ENCODE measurements at regions of chr9 and their contacts with region 1.

Region 1: DNA sequence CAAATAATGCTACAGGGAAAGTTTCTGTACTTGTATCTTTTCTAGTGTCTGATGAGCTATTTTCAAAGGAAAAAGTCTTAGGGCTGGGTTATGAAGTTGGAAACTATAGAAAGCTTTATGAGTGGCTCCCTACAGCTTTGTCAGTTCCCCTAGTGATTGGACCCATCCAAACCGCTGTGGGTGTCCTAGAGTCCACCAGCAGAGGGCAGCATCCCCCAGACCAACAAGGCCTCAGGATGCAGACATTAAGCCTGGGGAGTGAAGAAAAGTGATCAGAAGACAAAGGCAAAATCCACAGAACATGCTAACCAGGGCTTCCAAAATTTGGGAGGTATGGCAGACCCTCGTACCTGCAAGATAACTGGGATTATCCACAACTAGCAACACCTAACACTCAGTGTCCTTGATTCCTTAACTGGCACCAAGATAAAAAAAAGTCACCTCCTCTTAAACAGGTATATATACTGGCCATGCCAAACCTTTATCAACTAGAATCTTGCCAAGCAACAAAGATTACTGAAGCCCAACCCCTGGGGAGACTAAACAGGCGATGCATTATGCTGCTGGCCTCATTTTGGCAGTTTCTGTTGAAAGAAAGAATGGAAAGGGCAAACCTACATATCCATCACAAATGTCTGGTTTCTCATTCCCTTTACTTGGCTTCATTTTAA is 110.4 kb upstream of the NR5A1 start:
- DNase-seq: peak; percentile 78 to 90 (median 84)
- H3K4me3 ChIP-seq: no peak overlapping the region
- H3K27ac ChIP-seq: no peak overlapping the region
- H3K4me1 ChIP-seq: peaks cover 0 to 21% (median 15%) of the 10 kb centered on the region in 4 experiments
- H3K27me3 ChIP-seq: no peaks in the 10 kb centered on the region

Region 2: DNA sequence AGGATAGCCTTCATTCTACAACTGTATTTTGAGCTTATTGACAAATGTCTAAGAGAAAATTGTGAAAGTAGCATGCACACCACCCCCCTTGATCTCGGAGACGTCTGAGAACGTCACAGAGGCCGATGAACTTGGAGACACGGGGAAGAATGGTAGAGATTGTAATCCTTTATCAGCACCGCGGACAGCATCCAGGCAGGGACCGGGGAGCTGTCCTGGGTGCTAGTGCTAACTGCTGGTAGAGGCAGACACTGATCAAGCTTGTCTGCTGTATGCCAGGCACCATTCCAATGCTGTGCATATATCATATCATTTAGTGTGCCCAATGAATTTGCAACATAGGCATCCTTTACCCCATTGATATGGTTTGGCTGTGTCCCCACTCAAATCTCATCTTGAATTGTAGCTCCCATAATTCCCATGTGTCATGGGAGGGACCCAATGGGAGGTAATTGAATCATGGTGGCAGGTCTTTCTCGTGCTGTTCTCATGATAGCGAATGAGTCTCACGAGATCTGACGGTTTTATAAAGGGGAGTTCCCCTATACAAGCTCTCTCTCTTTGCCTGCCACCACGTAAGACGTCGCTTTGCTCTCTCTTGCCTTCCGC is 507.2 kb before region 1 on chr9:
- CTCF ChIA-PET with region 1: no interaction called
- POLR2A ChIA-PET with region 1: no interaction called
- DNase-seq: peak; percentile 70 to 87 (median 86)
- H3K4me3 ChIP-seq: no peak overlapping the region
- H3K27ac ChIP-seq: no peak overlapping the region
- H3K4me1 ChIP-seq: no peaks in the 10 kb centered on the region
- H3K27me3 ChIP-seq: peaks cover 0 to 15% (median 7%) of the 10 kb centered on the region in 5 experiments

Region 3: DNA sequence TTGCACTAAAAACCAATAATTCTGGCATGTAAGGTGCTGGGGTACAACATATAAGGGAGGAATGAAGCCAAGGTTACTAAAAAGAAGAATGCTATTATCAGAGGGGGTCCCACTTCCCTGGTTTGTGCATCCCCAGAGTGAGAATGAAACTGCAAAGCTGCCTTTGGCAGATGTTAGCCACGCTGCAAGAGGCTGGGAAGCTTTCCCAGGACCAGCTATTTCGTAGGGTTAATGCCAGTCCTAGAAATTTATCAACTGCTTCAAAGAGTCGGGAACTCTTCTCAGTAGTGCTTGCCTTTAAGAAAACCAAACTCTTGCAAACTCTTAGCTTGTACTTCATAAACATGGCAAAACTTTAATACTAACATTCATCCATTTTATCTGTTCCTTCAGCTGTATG is 22.9 kb before region 1 on chr9:
- CTCF ChIA-PET with region 1: interaction called, 16 read pairs
- POLR2A ChIA-PET with region 1: no interaction called
- DNase-seq: no peak
- H3K4me3 ChIP-seq: no peak overlapping the region
- H3K27ac ChIP-seq: no peak overlapping the region
- H3K4me1 ChIP-seq: peaks cover 0 to 19% (median 11%) of the 10 kb centered on the region in 4 experiments
- H3K27me3 ChIP-seq: no peaks in the 10 kb centered on the region

Region 4: GRCh38 chr9:124675261-124676158 is 57.9 kb after region 1 on chr9:
- CTCF ChIA-PET with region 1: interaction called, 11 read pairs
- POLR2A ChIA-PET with region 1: no interaction called
- DNase-seq: peak in 2 of 3 donors; percentile 33 to 48
- H3K4me3 ChIP-seq: no peak overlapping the region
- H3K27ac ChIP-seq: no peak overlapping the region
- H3K4me1 ChIP-seq: peaks cover 0 to 2% (median under 1%) of the 10 kb centered on the region in 4 experiments
- H3K27me3 ChIP-seq: no peaks in the 10 kb centered on the region

Region 5: DNA sequence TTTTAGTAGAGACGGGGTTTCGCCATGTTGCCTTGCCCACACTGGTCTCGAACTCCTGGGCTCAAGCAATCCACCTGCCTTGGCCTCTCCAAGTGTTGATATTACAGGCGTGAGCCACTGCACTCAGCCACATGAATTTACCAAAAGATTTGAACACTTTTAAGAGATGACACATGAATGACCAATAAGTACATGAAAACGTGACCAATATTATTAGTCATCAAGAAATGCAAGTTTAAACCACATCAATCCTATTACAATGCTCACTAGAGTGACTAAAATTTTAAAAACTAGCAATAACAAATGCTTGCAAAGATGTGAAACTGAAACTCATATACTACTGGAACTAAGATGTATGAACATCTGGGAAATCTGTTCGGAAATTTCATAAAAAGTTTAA is 99.2 kb after region 1 on chr9:
- CTCF ChIA-PET with region 1: interaction called, 155 read pairs
- POLR2A ChIA-PET with region 1: no interaction called
- DNase-seq: no peak
- H3K4me3 ChIP-seq: no peak overlapping the region
- H3K27ac ChIP-seq: no peak overlapping the region
- H3K4me1 ChIP-seq: peaks cover 0 to 7% (median 0%) of the 10 kb centered on the region in 4 experiments
- H3K27me3 ChIP-seq: no peaks in the 10 kb centered on the region

Region 6: GRCh38 chr9:124764774-124765438 is 147.3 kb after region 1 on chr9:
- CTCF ChIA-PET with region 1: interaction called, 41 read pairs
- POLR2A ChIA-PET with region 1: no interaction called
- DNase-seq: peak in 2 of 3 donors; percentile 63 to 71
- H3K4me3 ChIP-seq: no peak overlapping the region
- H3K27ac ChIP-seq: no peak overlapping the region
- H3K4me1 ChIP-seq: peaks cover 13 to 61% (median 42%) of the 10 kb centered on the region in 4 experiments
- H3K27me3 ChIP-seq: no peaks in the 10 kb centered on the region

Region 7: DNA sequence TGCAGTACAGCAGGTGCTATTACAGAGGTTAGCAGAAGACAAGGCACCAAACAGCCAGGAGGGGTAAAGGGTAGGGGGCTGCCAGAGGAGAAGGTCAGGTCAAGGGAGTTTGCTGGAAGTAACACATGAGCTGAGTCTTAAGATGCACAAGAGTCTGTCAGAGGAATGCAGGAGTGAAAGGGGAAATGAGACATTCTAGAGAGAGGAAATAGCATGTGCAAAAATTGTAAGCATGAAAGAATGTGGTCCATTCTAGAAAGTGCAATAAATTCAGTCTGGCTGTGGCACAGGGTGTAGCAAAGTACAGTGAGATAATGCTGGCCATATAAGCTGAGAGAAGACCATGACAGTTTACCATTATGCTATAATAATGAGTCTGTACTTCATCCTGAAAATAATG is 316.7 kb after region 1 on chr9:
- CTCF ChIA-PET with region 1: no interaction called
- POLR2A ChIA-PET with region 1: no interaction called
- DNase-seq: no peak
- H3K4me3 ChIP-seq: no peak overlapping the region
- H3K27ac ChIP-seq: no peak overlapping the region
- H3K4me1 ChIP-seq: peaks cover 0 to 3% (median 1%) of the 10 kb centered on the region in 4 experiments
- H3K27me3 ChIP-seq: no peaks in the 10 kb centered on the region

Region 8: GRCh38 chr9:125066839-125067619 is 449.4 kb after region 1 on chr9:
- CTCF ChIA-PET with region 1: no interaction called
- POLR2A ChIA-PET with region 1: no interaction called
- DNase-seq: no peak
- H3K4me3 ChIP-seq: no peak overlapping the region
- H3K27ac ChIP-seq: no peak overlapping the region
- H3K4me1 ChIP-seq: peaks cover 0 to 3% (median 0%) of the 10 kb centered on the region in 4 experiments
- H3K27me3 ChIP-seq: no peaks in the 10 kb centered on the region